Heart left ventricle (tissue), 16 donors: ENCODE measurements at regions of chr15 and their contacts with region 1.

Region 1: DNA sequence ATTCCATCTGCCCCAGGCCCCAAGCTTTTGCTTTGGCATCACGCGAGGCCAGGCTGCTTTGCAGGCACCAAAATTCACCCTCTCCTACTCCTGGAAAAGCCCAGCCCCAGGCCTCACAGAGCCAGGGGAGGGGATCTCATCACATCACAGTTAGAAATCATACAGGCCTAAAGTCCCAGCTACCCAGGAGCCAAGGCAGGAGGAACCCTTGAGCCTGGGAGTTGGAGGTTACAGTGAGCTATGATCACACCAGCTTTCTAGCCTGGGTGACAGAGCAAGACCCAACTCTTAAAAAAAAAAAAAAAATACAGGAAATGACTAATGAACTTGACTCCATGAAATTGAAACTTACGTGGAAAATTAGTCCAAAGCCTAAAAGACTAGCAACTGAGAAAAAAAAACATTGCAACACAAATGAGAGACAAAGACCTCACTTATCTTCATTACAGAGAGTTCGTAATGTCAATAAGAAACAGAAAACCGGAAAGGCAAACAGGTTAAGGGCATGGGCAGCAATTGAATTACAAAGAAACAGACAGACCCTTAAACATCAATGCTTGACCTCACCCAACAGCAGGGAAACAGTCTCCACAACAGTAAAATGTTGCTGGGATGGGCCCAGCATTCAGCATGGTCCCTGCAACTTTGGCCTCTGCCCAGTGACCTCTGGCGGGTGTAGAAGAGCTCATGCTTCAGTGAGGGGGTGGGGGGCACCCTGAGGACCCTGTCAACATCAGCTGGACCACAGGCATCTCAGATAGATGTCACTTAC is 151.5 kb downstream of the LRRK1 start:
- DNase-seq: peak in 2 of 5 donors; percentile 16 to 43
- ATAC-seq: peak; percentile 52 to 90 (median 76)
- H3K4me3 ChIP-seq: no peak overlapping the region
- H3K27ac ChIP-seq: peak overlapping the region; percentile 40 to 77 (median 64)
- H3K4me1 ChIP-seq: peaks cover 0 to 36% (median 14%) of the 10 kb centered on the region in 12 donors
- H3K27me3 ChIP-seq: no peaks in the 10 kb centered on the region
- CTCF ChIP-seq: no peak
- POLR2A ChIP-seq: no peak

Region 2: DNA sequence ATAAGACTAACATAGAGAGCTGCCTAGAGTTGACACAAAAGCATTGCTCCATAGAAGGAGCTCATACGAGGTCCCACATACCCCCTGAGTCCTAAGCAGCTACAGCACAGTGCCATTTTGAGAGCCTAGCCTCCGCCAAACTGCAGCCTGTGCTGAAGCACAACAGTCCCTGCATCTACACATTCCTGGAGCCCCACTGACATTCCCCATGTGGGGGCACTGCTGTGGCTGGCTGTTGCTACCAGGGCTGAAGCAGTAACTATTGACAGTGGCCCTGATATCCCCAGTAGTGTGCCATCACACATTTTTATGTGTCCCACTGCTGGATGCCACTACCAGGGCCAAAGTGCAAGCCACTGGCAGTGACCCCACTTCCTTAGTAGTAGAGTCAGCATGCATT is 622.2 kb before region 1 on chr15:
- intact Hi-C with region 1: loop called in 1 of 10 experiments (anchors 10 kb)
- DNase-seq: no peak
- ATAC-seq: no peak
- H3K4me3 ChIP-seq: no peak overlapping the region
- H3K27ac ChIP-seq: no peak overlapping the region
- H3K4me1 ChIP-seq: no peaks in the 10 kb centered on the region
- H3K27me3 ChIP-seq: no peaks in the 10 kb centered on the region
- CTCF ChIP-seq: no peak
- POLR2A ChIP-seq: no peak

Region 3: DNA sequence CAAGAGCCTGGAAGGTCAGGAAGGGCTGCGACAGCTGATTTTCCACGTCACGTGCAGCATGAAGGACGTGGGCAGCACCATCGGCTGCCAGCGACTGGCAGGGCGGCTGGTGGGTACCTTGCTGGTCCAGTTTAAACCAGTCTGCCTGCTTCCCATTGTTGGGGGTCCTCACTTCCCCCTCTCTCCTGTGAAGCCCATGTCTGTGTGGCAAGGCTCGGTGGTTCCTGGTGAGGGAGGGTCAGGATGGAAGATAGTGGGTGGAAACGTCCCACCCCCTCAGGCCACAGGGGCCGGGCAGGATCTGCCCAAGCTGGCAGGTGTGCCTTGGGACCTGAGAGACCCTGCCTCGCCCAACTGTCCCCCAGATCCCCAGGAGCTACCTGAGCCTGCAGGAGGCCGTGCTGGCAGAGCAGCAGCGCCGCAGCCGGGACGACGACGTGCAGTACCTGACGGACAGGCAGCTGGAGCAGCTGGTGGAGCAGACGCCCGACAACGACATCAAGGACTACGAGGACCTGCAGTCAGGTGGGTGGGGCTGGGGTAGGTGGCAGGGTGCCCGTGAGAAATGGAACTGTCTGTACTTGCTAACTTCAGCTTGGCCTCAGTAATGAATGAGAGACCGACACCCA is 43.3 kb before region 1 on chr15:
- intact Hi-C with region 1: loop called in 1 of 10 experiments (anchors 5 kb)
- DNase-seq: peak in 2 of 5 donors; percentile 5 to 22
- ATAC-seq: no peak
- H3K4me3 ChIP-seq: no peak overlapping the region
- H3K27ac ChIP-seq: no peak overlapping the region
- H3K4me1 ChIP-seq: peaks cover 0 to 33% (median 15%) of the 10 kb centered on the region in 12 donors
- H3K27me3 ChIP-seq: no peaks in the 10 kb centered on the region
- CTCF ChIP-seq: no peak
- POLR2A ChIP-seq: no peak